H1 (cell line): ENCODE measurements at regions of chr19 and their contacts with region 1.

Region 1: GRCh38 chr19:572140-572742 is at the start of gene BSG:
- DNase-seq: peak; percentile 94 to 97
- H3K4me3 ChIP-seq: peak within 1 kb of the TSS; percentile 93 to 97 (median 94)
- H3K27ac ChIP-seq: peak within 1 kb of the TSS; percentile 81
- H3K4me1 ChIP-seq: peaks cover 0 to 21% (median 11%) of the 10 kb centered on the region in 4 experiments; a peak in 5 of 7 replicates
- H3K27me3 ChIP-seq: peaks cover 0 to 3% (median 0%) of the 10 kb centered on the region in 4 experiments; a peak in 1 of 7 replicates
- CTCF ChIP-seq: no peak
- EP300 ChIP-seq: peak in 1 of 2 experiments; percentile 36; a peak in 1 of 3 replicates
- POLR2A ChIP-seq: peak; percentile 95 to 98
- RAD21 ChIP-seq: no peak
- total RNA-seq, gene BSG: 726 and 743 TPM in 2 replicates

Region 2: GRCh38 chr19:506404-507285 is 65.6 kb before region 1 on chr19:
- CTCF ChIA-PET with region 1: interaction called, 3 read pairs
- POLR2A ChIA-PET with region 1: interaction called, 12 read pairs
- DNase-seq: peak; percentile 92 to 94
- H3K4me3 ChIP-seq: peak overlapping the region; percentile 79 to 86 (median 80)
- H3K27ac ChIP-seq: peak overlapping the region; percentile 97
- H3K4me1 ChIP-seq: peaks cover 0 to 12% (median 8%) of the 10 kb centered on the region in 4 experiments; a peak in 5 of 7 replicates
- H3K27me3 ChIP-seq: no peaks in the 10 kb centered on the region; a peak in 2 of 7 replicates
- CTCF ChIP-seq: peak; percentile 93 to 99 (median 97)
- EP300 ChIP-seq: peak in 1 of 2 experiments; percentile 49; a peak in 1 of 3 replicates
- POLR2A ChIP-seq: 0 out of 3 replicates have a peak, but pooled peaks of 1 of the 2 experiments have one; percentile 47
- RAD21 ChIP-seq: peak; percentile 57 to 66

Region 3: DNA sequence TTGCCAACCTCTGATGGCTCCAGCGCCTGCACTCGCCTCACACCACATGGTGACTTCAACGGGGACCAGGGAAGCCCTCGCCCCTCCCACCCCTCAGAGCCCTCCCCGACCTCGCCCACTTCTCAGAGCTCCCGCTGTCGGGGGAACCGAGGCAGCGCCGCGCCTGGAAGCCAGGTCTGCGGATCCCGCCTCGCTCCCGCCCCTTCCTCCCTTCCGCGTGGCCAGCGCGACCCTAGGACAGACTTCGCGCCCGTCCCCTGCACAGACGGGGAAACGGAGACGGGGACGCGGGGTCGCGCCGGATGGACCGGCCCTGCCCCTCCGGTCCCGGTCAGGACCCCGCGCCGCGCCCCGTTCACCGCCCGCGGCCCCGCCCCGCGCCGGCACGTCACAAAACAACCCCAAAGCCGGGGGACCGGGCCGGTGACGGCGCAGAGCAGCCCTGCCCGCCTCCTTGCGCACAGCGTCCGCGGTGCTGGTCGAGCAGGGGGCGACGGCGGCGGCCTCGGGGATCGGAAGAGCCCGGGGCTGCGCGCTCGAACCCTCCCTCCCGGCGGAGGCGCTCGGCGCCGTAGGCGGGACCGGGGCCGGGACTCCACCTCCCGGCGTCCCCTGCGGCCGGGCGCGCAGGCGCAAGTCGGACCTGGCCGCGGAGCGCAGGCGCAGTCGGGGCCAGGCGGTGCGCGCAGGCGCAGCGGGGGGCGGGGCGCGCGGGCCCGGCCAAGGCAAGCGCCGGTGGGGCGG is 41.1 kb before region 1 on chr19:
- CTCF ChIA-PET with region 1: interaction called, 4 read pairs
- POLR2A ChIA-PET with region 1: interaction called, 19 read pairs
- DNase-seq: peak in 1 of 2 experiments; percentile 94
- H3K4me3 ChIP-seq: peak overlapping the region; percentile 63 to 96 (median 82)
- H3K27ac ChIP-seq: peak overlapping the region; percentile 77; the same call in 1 of the 2 replicates
- H3K4me1 ChIP-seq: peaks cover 0 to 10% (median 8%) of the 10 kb centered on the region in 4 experiments; a peak in 6 of 7 replicates
- H3K27me3 ChIP-seq: no peaks in the 10 kb centered on the region
- CTCF ChIP-seq: no peak
- EP300 ChIP-seq: no peak
- POLR2A ChIP-seq: no peak
- RAD21 ChIP-seq: no peak

Region 4: DNA sequence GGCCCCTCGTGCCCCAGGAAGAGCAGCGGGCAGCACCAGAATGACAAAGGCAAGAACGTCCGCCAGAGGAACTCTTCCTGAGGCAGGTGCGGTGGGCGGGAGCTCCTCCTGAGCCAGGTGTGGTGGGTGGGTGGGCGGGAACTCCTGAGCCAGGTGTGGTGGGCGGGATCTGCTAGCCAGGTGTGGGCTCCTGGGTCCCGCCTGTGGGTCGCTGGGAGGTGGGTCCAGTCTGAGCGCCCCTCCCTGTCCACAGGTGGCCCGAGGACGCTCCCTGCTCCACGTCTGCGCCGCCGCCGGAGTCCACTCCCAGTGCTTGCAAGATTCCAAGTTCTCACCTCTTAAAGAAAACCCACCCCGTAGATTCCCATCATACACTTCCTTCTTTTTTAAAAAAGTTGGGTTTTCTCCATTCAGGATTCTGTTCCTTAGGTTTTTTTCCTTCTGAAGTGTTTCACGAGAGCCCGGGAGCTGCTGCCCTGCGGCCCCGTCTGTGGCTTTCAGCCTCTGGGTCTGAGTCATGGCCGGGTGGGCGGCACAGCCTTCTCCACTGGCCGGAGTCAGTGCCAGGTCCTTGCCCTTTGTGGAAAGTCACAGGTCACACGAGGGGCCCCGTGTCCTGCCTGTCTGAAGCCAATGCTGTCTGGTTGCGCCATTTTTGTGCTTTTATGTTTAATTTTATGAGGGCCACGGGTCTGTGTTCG is 10.4 kb after region 1 on chr19:
- CTCF ChIA-PET with region 1: interaction called, 51 read pairs
- POLR2A ChIA-PET with region 1: interaction called, 78 read pairs
- DNase-seq: no peak
- H3K4me3 ChIP-seq: no peak overlapping the region
- H3K27ac ChIP-seq: no peak overlapping the region
- H3K4me1 ChIP-seq: peaks cover 0 to 6% (median 4%) of the 10 kb centered on the region in 4 experiments; a peak in 4 of 7 replicates
- H3K27me3 ChIP-seq: no peaks in the 10 kb centered on the region
- CTCF ChIP-seq: no peak
- EP300 ChIP-seq: no peak
- POLR2A ChIP-seq: no peak
- RAD21 ChIP-seq: no peak

Region 5: DNA sequence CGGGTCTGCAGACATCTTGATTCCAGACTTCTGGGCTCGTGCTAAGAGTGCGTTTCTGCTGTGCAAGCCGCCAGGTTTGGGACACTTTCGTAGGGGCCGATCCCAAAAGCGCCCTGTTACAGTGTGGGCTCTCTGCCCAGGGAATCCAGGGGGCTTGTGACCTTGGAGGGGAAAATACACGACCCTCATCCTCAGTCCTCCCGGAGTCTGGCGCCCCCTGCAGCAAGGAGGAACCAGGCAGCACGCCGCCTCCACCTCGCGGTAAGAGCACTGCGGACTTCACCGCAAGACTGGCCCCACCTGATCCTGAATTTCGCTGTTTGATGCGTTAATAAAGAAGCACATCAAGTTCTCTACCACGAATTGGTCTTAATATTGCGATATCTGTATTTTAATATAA is 55.9 kb after region 1 on chr19:
- CTCF ChIA-PET with region 1: interaction called, 13 read pairs
- POLR2A ChIA-PET with region 1: interaction called, 11 read pairs
- DNase-seq: peak; percentile 33 to 84
- H3K4me3 ChIP-seq: no peak overlapping the region
- H3K27ac ChIP-seq: no peak overlapping the region
- H3K4me1 ChIP-seq: peaks cover 0 to 3% (median 1%) of the 10 kb centered on the region in 4 experiments; a peak in 3 of 7 replicates
- H3K27me3 ChIP-seq: no peaks in the 10 kb centered on the region
- CTCF ChIP-seq: peak; percentile 86 to 96 (median 86)
- EP300 ChIP-seq: no peak
- POLR2A ChIP-seq: no peak
- RAD21 ChIP-seq: peak; percentile 50 to 63; a peak in 3 of 4 replicates